Activated CD8-positive, alpha-beta T cell treated with anti-CD3 and anti-CD28 coated beads for 36 hours (primary cell): ENCODE measurements at regions of chr10 and their contacts with region 1.

Region 1: GRCh38 chr10:93376372-93377293 is 105.5 kb downstream of the MYOF start:
- DNase-seq: peak; percentile 39
- ATAC-seq: peak; percentile 48
- H3K4me3 Mint-ChIP-seq: no peak overlapping the region
- H3K27ac Mint-ChIP-seq: peak overlapping the region; percentile 40
- H3K4me1 Mint-ChIP-seq: peaks cover 35% of the 10 kb centered on the region
- H3K27me3 Mint-ChIP-seq: peaks cover 4% of the 10 kb centered on the region
- CTCF ChIP-seq: peak; percentile 90

Region 2: GRCh38 chr10:92857904-92858514 is 518.6 kb before region 1 on chr10:
- CTCF ChIA-PET with region 1: no interaction called
- POLR2A ChIA-PET with region 1: no interaction called
- intact Hi-C with region 1: no loop called
- DNase-seq: no peak
- ATAC-seq: no peak
- H3K4me3 Mint-ChIP-seq: no peak overlapping the region
- H3K27ac Mint-ChIP-seq: no peak overlapping the region
- H3K4me1 Mint-ChIP-seq: peaks cover 5% of the 10 kb centered on the region
- H3K27me3 Mint-ChIP-seq: no peaks in the 10 kb centered on the region
- CTCF ChIP-seq: no peak

Region 3: GRCh38 chr10:93352638-93353383 is 23.8 kb before region 1 on chr10:
- CTCF ChIA-PET with region 1: interaction called, 30 read pairs
- POLR2A ChIA-PET with region 1: no interaction called
- intact Hi-C with region 1: no loop called
- DNase-seq: no peak
- ATAC-seq: no peak
- H3K4me3 Mint-ChIP-seq: no peak overlapping the region
- H3K27ac Mint-ChIP-seq: no peak overlapping the region
- H3K4me1 Mint-ChIP-seq: peaks cover 4% of the 10 kb centered on the region
- H3K27me3 Mint-ChIP-seq: peaks cover 13% of the 10 kb centered on the region
- CTCF ChIP-seq: peak; percentile 86

Region 4: DNA sequence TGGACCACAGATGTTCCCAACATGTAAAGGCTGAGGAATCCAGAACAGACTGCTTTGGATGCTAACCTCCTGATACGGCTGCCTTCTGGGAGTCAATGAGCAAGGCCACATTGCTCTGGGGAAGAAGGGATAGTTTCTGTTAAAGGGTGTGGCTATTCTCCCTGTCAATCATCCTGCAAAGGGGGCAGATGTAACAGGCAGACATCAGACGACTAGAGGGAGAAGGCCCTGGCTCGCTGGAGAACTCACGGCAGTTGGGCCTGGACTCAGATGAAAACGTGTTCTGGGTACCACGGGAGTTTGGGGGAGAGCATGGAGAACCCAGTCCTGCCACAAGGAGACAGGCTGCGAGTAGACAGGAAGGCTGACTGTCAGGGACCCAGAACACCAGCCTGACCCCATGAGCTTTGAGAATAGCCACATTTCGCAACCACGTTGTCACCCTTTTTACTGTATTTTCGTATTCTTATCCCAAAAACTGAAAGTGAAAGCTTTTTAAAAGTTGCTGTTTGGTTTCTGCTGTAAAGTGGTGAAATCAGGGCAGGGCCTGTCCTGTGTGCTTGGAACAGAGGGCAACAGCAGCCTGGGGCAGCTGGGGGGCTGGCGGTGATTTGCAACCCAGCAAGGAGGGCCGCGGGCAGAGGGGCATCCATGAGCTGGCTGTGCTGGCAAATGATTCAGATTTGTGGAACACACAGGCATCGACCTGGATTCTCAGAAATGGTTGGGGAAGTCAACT is 10.2 kb after region 1 on chr10:
- CTCF ChIA-PET with region 1: interaction called, 52 read pairs
- POLR2A ChIA-PET with region 1: interaction called, 3 read pairs
- intact Hi-C with region 1: no loop called
- DNase-seq: peak; percentile 26
- ATAC-seq: peak; percentile 66
- H3K4me3 Mint-ChIP-seq: no peak overlapping the region
- H3K27ac Mint-ChIP-seq: peak overlapping the region; percentile 65
- H3K4me1 Mint-ChIP-seq: peaks cover 16% of the 10 kb centered on the region
- H3K27me3 Mint-ChIP-seq: no peaks in the 10 kb centered on the region
- CTCF ChIP-seq: no peak

Region 5: GRCh38 chr10:93420091-93420490 is 43.5 kb after region 1 on chr10:
- CTCF ChIA-PET with region 1: interaction called, 11 read pairs
- POLR2A ChIA-PET with region 1: no interaction called
- intact Hi-C with region 1: no loop called
- DNase-seq: no peak
- ATAC-seq: no peak
- H3K4me3 Mint-ChIP-seq: no peak overlapping the region
- H3K27ac Mint-ChIP-seq: no peak overlapping the region
- H3K4me1 Mint-ChIP-seq: peaks cover 5% of the 10 kb centered on the region
- H3K27me3 Mint-ChIP-seq: no peaks in the 10 kb centered on the region
- CTCF ChIP-seq: no peak

Region 6: GRCh38 chr10:93445097-93445960 is 68.7 kb after region 1 on chr10:
- CTCF ChIA-PET with region 1: interaction called, 18 read pairs
- POLR2A ChIA-PET with region 1: no interaction called
- intact Hi-C with region 1: no loop called
- DNase-seq: no peak
- ATAC-seq: no peak
- H3K4me3 Mint-ChIP-seq: no peak overlapping the region
- H3K27ac Mint-ChIP-seq: no peak overlapping the region
- H3K4me1 Mint-ChIP-seq: no peaks in the 10 kb centered on the region
- H3K27me3 Mint-ChIP-seq: no peaks in the 10 kb centered on the region
- CTCF ChIP-seq: no peak

Region 7: DNA sequence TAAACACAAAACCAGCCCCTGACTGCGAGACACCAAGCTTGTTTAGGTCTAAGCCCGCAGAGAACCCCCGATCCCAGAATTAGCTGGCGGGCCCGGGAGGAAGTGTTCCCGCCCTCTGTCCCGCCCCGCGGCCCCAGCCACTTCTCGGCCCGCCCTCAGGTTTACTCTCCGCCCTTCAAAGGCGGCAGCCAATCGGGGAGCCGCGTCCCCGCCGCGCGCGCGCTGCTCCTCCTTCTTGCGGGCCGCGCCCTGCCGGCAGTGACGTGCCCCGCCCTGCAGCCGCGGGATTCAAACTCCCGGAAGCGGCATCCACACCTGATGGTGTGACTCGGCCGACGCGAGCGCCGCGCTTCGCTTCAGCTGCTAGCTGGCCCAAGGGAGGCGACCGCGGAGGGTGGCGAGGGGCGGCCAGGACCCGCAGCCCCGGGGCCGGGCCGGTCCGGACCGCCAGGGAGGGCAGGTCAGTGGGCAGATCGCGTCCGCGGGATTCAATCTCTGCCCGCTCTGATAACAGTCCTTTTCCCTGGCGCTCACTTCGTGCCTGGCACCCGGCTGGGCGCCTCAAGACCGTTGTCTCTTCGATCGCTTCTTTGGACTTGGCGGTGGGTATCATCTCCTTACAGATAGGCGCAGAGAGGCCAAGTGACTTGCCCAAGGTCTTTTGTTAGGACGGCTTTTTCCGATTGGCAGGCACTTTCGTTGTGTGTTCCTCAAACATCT is 119.8 kb after region 1 on chr10 and contains the start of gene CEP55:
- CTCF ChIA-PET with region 1: interaction called, 595 read pairs
- POLR2A ChIA-PET with region 1: interaction called, 7 read pairs
- intact Hi-C with region 1: no loop called
- DNase-seq: peak; percentile 95
- ATAC-seq: peak; percentile 99
- H3K4me3 Mint-ChIP-seq: peak within 1 kb of the TSS; percentile 82
- H3K27ac Mint-ChIP-seq: peak within 1 kb of the TSS; percentile 73
- H3K4me1 Mint-ChIP-seq: peaks cover 13% of the 10 kb centered on the region
- H3K27me3 Mint-ChIP-seq: peaks cover 7% of the 10 kb centered on the region
- CTCF ChIP-seq: no peak
- total RNA-seq, gene CEP55: 44.6 to 45.0 TPM

Region 8: DNA sequence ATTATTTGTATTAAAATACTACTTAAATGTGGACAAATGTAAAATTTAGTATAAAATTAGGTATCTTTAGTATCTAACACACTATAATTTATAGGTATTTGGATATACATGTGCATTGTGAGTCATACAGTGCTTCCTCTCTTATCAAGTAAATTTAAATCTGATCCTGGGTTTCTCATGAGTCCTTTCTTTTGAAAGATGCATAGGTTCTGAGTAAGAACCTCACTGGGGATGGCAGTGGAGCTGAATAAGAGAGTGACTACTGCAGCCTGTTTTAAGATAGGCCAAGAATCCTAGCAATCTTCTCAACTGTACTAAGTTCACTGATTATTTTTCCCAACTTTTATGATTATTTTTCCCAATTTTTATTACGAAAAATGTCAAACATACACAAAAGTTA is 135.9 kb after region 1 on chr10:
- CTCF ChIA-PET with region 1: interaction called, 133 read pairs
- POLR2A ChIA-PET with region 1: interaction called, 4 read pairs
- intact Hi-C with region 1: no loop called
- DNase-seq: no peak
- ATAC-seq: no peak
- H3K4me3 Mint-ChIP-seq: no peak overlapping the region
- H3K27ac Mint-ChIP-seq: no peak overlapping the region
- H3K4me1 Mint-ChIP-seq: peaks cover 4% of the 10 kb centered on the region
- H3K27me3 Mint-ChIP-seq: no peaks in the 10 kb centered on the region
- CTCF ChIP-seq: no peak